PC-9 (cell line): ENCODE measurements at regions of chr16 and their contacts with region 1.

Region 1: DNA sequence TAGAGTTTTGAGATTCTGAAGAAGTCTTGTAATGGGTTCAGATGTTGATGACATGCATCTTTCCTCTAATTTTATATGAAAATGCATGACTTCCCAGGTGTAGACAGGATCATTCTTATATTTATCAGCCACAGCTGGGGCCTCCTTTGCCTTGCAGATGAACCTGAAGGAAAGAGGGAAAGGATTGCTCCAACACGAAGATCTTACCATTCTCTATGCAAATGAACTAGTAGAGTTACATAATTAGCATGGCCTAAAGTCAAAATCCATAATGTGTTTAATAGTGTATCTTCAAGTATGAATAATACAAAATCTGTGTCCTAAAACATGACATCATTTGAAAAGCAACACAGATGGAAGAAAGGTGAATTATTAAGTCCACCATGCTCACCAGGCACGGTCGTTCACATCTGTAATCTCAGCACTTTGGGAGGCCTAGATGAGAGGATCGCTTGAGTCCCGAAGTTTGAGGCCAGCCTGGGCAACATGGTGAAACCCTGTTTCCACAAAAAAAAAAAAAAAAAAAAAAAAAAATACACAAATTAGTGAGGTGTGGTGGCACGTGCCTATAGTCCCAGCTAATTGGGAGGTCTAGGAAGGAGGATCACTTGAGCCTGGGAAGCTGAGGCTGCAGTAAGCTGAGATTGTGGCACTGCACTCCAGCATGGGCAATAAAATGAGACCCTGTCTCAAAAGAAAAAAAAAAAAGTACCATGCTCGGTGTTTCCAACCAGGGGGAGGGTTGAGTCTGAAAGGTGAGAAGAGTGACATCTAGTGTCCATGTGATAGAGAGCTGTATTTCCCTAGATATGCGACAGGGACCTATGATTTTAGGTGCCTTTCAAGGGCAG is 6.3 kb downstream of the VWA3A start:
- DNase-seq: peak; percentile 27 to 55
- H3K4me3 ChIP-seq: peak overlapping the region; percentile 34; the same call in 1 of the 2 replicates
- H3K27ac ChIP-seq: no peak overlapping the region
- H3K4me1 ChIP-seq: no peaks in the 10 kb centered on the region
- H3K27me3 ChIP-seq: no peaks in the 10 kb centered on the region
- CTCF ChIP-seq: peak; percentile 66

Region 2: GRCh38 chr16:21989133-21989532 is 109.5 kb before region 1 on chr16:
- CTCF ChIA-PET with region 1: no interaction called
- POLR2A ChIA-PET with region 1: no interaction called
- intact Hi-C with region 1: loop called (anchors 5 kb)
- DNase-seq: no peak
- H3K4me3 ChIP-seq: no peak overlapping the region
- H3K27ac ChIP-seq: no peak overlapping the region
- H3K4me1 ChIP-seq: no peaks in the 10 kb centered on the region
- H3K27me3 ChIP-seq: no peaks in the 10 kb centered on the region
- CTCF ChIP-seq: no peak

Region 3: GRCh38 chr16:22206013-22206841 is 107.6 kb after region 1 on chr16 and contains the start of gene EEF2K:
- CTCF ChIA-PET with region 1: no interaction called
- POLR2A ChIA-PET with region 1: no interaction called
- intact Hi-C with region 1: no loop called
- DNase-seq: peak; percentile 88 to 97
- H3K4me3 ChIP-seq: peak within 1 kb of the TSS; percentile 74
- H3K27ac ChIP-seq: peak within 1 kb of the TSS; percentile 73
- H3K4me1 ChIP-seq: peaks cover 25% of the 10 kb centered on the region
- H3K27me3 ChIP-seq: no peaks in the 10 kb centered on the region
- CTCF ChIP-seq: peak; percentile 68
- total RNA-seq, gene EEF2K: 29.8 and 34.7 TPM in 2 replicates